ENCODE measurements at regions of chr22 and their contacts with region 1.

Region 1: DNA sequence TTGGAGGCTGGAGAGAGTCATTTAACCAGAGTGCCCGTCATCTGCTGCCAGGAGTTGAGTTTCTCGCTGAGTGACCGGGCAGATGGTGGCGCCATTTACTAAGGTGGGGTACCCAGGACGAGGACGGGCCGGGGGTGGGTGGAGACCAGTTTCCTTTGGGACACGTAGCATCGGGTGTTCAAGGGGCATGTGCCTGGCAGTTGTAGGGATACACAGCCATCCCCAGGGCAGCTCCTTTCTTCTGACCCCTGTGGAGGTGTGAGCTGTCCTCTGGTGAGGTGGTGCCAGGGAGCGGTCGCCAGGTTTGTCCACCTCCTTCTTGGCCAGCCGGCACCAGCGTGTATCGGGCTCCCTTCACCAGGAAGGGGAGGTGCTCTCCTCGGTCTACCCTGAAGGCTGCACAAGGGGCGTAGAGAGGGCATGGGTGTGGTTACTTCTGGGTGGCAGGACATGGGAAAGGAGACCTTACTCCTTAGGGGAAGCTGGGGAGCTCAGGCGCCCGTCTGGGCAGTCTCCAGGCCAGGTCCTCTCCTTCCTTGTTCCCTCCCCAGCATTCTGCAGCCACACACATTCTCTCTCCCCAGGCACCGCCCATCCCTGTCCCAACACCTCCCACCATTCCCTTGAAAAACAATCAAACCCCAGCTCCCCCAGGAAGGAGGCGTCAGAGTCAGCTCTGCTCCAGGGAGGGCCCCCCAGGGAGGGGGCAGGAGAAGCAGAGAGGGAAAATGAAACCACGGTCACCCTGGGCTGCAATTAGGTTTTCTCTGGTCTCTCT is 10.3 kb upstream of the MB start:
- DNase-seq: peak; percentile 86
- ATAC-seq: peak; percentile 83

Region 2: GRCh38 chr22:35921777-35922176 is 294.3 kb after region 1 on chr22:
- intact Hi-C with region 1: loop called (anchors 10 kb)
- DNase-seq: peak; percentile 68
- ATAC-seq: peak; percentile 94

Region 3: DNA sequence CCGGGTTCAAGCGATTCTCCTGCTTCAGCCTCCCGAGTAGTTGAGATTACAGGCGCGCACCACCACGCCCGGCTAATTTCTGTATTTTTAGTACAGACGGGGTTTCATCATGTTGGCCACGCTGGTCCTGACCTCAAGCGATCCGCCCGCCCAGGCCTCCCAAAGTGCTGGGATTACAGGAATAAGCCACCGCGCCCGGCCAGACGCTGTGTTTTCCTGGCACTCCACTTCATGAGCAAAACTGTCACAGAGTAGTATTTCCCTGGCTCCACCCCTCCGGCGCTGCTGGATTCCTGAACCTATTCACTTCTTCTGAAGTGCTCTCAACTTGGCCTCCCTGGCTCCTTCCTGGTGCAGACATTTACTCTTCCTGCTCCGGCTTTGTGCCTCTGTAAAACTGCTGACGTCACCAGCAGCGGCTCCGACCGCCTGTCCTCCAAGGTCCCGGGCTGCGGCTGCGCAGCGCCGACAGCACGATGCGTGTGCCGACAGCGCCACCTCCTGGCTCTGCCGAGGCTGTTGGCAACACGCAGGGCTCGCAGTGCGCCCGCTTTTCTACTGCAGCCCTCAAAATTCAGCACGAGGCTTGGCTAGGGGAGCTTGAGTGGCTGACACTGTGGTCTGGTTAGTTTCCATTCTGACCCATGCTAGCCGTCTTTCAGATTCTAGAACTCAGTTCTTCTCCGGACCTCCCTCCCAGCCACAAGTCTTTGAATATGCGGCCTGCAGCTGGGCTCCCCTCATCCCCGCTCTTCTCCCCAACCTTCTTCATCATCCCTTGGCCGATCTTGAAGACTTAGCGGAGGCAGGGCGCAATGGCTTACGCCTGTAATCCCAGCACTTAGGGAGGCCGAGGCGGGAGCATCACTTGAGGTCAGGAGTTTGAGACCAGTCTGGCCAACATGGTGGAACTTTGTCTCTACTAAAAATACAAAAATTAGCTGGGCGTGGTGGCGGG is 496.5 kb after region 1 on chr22:
- intact Hi-C with region 1: loop called (anchors 5 kb)
- DNase-seq: peak; percentile 97
- ATAC-seq: peak; percentile 98